Natural killer cell (primary cell): ENCODE measurements at regions of chr13 and their contacts with region 1.

Region 1: GRCh38 chr13:102596147-102597028 is at the start of gene TPP2:
- DNase-seq: peak; percentile 98 to 100
- ATAC-seq: peak; percentile 79 to 94 (median 85)
- H3K4me3 ChIP-seq: peak within 1 kb of the TSS; percentile 89
- H3K4me3 Mint-ChIP-seq: peak within 1 kb of the TSS; percentile 96
- H3K27ac ChIP-seq: peak within 1 kb of the TSS; percentile 98
- H3K27ac Mint-ChIP-seq: peak within 1 kb of the TSS; percentile 92 to 100
- H3K4me1 ChIP-seq: peaks cover 21% of the 10 kb centered on the region
- H3K4me1 Mint-ChIP-seq: peaks cover 69% of the 10 kb centered on the region in 2 donors
- H3K27me3 ChIP-seq: no peaks in the 10 kb centered on the region
- H3K27me3 Mint-ChIP-seq: no peaks in the 10 kb centered on the region
- CTCF ChIP-seq: no peak
- total RNA-seq, gene TPP2: 128 to 147 (median 136) TPM

Region 2: DNA sequence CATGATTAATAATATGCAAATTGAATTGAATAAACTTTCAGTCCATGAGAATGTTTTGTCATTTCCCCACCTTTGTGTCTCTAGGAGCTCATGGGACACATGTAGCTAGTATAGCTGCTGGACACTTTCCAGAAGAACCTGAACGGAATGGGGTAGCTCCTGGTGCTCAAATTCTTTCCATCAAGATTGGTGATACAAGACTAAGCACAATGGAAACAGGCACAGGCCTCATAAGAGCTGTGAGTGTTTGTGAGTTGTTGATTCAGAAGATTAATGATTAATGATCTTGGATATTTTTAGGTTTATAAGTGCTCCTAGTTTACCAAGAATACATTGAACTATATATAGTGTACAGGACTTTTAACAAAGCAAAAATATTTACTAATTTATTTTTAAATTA is 30.5 kb after region 1 on chr13:
- intact Hi-C with region 1: loop called (anchors 5 kb)
- DNase-seq: no peak
- ATAC-seq: no peak
- H3K4me3 ChIP-seq: no peak overlapping the region
- H3K4me3 Mint-ChIP-seq: no peak overlapping the region
- H3K27ac ChIP-seq: no peak overlapping the region
- H3K27ac Mint-ChIP-seq: peak overlapping the region in 1 of 2 donors; percentile 32
- H3K4me1 ChIP-seq: no peaks in the 10 kb centered on the region
- H3K4me1 Mint-ChIP-seq: peaks cover 0 to 7% of the 10 kb centered on the region in 2 donors
- H3K27me3 ChIP-seq: no peaks in the 10 kb centered on the region
- H3K27me3 Mint-ChIP-seq: no peaks in the 10 kb centered on the region
- CTCF ChIP-seq: no peak

Region 3: GRCh38 chr13:102724923-102725322 is 128.5 kb after region 1 on chr13:
- intact Hi-C with region 1: loop called (anchors 2 kb)
- DNase-seq: peak in 1 of 2 donors; percentile 40
- ATAC-seq: peak; percentile 56 to 59 (median 57)
- H3K4me3 ChIP-seq: no peak overlapping the region
- H3K4me3 Mint-ChIP-seq: no peak overlapping the region
- H3K27ac ChIP-seq: no peak overlapping the region
- H3K27ac Mint-ChIP-seq: no peak overlapping the region
- H3K4me1 ChIP-seq: peaks cover 9% of the 10 kb centered on the region
- H3K4me1 Mint-ChIP-seq: peaks cover 20 to 28% of the 10 kb centered on the region in 2 donors
- H3K27me3 ChIP-seq: no peaks in the 10 kb centered on the region
- H3K27me3 Mint-ChIP-seq: peaks cover 10 to 13% of the 10 kb centered on the region in 2 donors
- CTCF ChIP-seq: peak; percentile 12

Region 4: DNA sequence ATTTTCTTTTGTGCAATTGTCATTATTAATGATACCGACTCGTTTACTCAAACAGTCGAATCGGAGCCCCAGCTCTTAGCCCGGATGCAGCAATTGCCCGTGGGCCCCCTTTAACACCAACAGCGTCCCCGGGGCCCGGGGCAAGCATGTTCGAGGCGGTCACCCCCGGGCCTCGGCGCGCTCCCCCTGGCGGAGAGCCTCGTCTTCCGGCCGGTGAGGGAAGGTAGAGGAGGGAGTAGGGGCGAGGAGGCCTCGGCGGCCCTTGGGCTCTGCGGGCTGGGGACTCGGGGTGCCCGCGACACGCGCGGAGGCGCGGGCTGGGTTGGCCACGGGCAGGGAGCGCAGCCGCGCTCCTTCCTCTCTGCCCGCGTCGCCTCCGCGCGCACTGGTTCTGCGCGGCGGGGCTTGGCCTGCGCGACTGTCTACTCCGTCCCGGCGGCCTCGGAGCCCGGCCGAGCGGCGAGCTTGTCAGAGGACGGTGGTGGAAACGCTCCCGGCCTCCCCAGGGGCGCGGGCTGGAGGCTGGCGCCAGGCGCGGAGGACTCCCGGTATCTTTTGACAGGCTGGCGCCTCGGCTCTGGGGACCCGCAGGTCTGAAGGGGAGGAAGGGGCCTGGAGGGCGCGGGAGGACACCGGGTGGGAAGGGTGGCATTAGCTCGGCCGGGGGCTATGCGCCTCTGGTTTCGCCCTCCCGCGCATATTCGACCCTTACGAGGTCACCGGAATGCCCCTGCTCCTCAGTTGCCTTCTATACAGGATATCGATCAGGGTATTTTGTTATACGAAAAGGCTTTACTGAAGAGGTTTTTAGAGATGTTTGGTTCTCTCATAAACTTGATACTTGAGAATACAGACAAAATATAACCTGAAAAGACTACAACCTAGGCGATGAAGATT is 204.0 kb after region 1 on chr13:
- intact Hi-C with region 1: loop called (anchors 5 kb)
- DNase-seq: peak; percentile 82 to 87
- ATAC-seq: peak; percentile 85 to 91 (median 86)
- H3K4me3 ChIP-seq: peak overlapping the region; percentile 50
- H3K4me3 Mint-ChIP-seq: peak overlapping the region; percentile 96
- H3K27ac ChIP-seq: peak overlapping the region; percentile 47
- H3K27ac Mint-ChIP-seq: peak overlapping the region; percentile 79 to 88
- H3K4me1 ChIP-seq: peaks cover 21% of the 10 kb centered on the region
- H3K4me1 Mint-ChIP-seq: peaks cover 30 to 42% of the 10 kb centered on the region in 2 donors
- H3K27me3 ChIP-seq: peaks cover 2% of the 10 kb centered on the region
- H3K27me3 Mint-ChIP-seq: peaks cover 0 to 3% of the 10 kb centered on the region in 2 donors
- CTCF ChIP-seq: peak; percentile 82